ENCODE measurements at regions of chr12 and their contacts with region 1.

Region 1: GRCh38 chr12:123580772-123581171 is 3.6 kb upstream of the TMED2 start:
- DNase-seq: no peak
- ATAC-seq: no peak
- H3K4me3 ChIP-seq: no peak overlapping the region
- H3K27ac ChIP-seq: no peak overlapping the region
- H3K4me1 ChIP-seq: peaks cover 11 to 12% of the 10 kb centered on the region in 2 experiments
- H3K27me3 ChIP-seq: no peaks in the 10 kb centered on the region
- CTCF ChIP-seq: no peak
- EP300 ChIP-seq: no peak
- POLR2A ChIP-seq: no peak
- RAD21 ChIP-seq: no peak

Region 2: GRCh38 chr12:123457980-123458783 is 122.6 kb before region 1 on chr12 and contains the start of gene SNRNP35:
- CTCF ChIA-PET with region 1: no interaction called
- POLR2A ChIA-PET with region 1: no interaction called
- in situ Hi-C with region 1: no loop called
- intact Hi-C with region 1: loop called (anchors 5 kb)
- DNase-seq: peak; percentile 75 to 91 (median 77)
- ATAC-seq: peak; percentile 87
- H3K4me3 ChIP-seq: peak within 1 kb of the TSS; percentile 75
- H3K27ac ChIP-seq: peak within 1 kb of the TSS; percentile 97
- H3K4me1 ChIP-seq: peaks cover 7 to 11% of the 10 kb centered on the region in 2 experiments
- H3K27me3 ChIP-seq: no peaks in the 10 kb centered on the region
- CTCF ChIP-seq: no peak
- EP300 ChIP-seq: peak; percentile 100
- POLR2A ChIP-seq: peak; percentile 94
- RAD21 ChIP-seq: no peak
- polyA plus RNA-seq, gene SNRNP35: 19.5 to 41.0 TPM

Measured in K562 (cell line).